MCF 10A (cell line): ENCODE measurements at regions of chr1 and their contacts with region 1.

Region 1: GRCh38 chr1:176559878-176560277 is 96.9 kb downstream of the PAPPA2 start:
- DNase-seq: peak; percentile 83
- H3K4me3 Mint-ChIP-seq: no peak overlapping the region
- H3K27ac Mint-ChIP-seq: no peak overlapping the region
- H3K4me1 Mint-ChIP-seq: no peaks in the 10 kb centered on the region
- H3K27me3 Mint-ChIP-seq: peaks cover 31% of the 10 kb centered on the region
- CTCF ChIP-seq: peak; percentile 99

Region 2: DNA sequence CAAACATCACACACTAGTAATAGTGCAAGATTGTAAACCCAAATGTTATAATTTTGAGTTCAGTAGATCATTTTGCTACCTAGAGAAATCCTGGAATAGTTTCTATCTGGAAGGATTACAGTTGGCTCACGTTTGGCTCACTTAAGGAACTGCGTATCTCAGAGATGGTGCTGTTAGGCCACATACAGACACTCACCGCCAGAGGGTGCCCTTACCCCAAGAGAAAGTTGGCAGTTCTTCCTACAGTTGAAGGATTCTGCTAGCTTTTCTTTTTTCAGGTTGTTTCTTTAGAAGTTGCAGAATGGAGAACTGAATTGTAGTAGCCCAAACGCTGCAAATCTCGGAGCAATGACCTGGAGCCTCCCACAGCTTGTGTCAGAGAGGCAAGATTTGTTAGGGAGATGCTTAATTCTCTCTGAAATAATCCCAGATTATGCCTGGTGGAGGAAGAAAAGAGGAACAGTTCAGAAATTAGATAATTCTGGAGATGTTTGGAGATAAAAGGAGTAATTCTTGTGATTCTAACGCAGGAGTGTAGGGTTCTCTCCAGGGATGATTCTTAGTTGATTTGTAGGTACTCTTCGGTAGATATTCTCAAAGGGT is 184.8 kb before region 1 on chr1:
- CTCF ChIA-PET with region 1: interaction called, 43 read pairs
- POLR2A ChIA-PET with region 1: interaction called, 3 read pairs
- intact Hi-C with region 1: loop called (anchors 1 kb)
- DNase-seq: peak; percentile 90
- H3K4me3 Mint-ChIP-seq: no peak overlapping the region
- H3K27ac Mint-ChIP-seq: no peak overlapping the region
- H3K4me1 Mint-ChIP-seq: no peaks in the 10 kb centered on the region
- H3K27me3 Mint-ChIP-seq: no peaks in the 10 kb centered on the region
- CTCF ChIP-seq: peak; percentile 93

Region 3: GRCh38 chr1:176541663-176542062 is 18.2 kb before region 1 on chr1:
- CTCF ChIA-PET with region 1: interaction called, 85 read pairs
- POLR2A ChIA-PET with region 1: no interaction called
- intact Hi-C with region 1: no loop called
- DNase-seq: peak; percentile 44
- H3K4me3 Mint-ChIP-seq: no peak overlapping the region
- H3K27ac Mint-ChIP-seq: no peak overlapping the region
- H3K4me1 Mint-ChIP-seq: peaks cover 5% of the 10 kb centered on the region
- H3K27me3 Mint-ChIP-seq: peaks cover 11% of the 10 kb centered on the region
- CTCF ChIP-seq: no peak

Region 4: GRCh38 chr1:176643536-176643935 is 83.7 kb after region 1 on chr1:
- CTCF ChIA-PET with region 1: interaction called, 10 read pairs
- POLR2A ChIA-PET with region 1: no interaction called
- intact Hi-C with region 1: no loop called
- DNase-seq: peak; percentile 46
- H3K4me3 Mint-ChIP-seq: no peak overlapping the region
- H3K27ac Mint-ChIP-seq: no peak overlapping the region
- H3K4me1 Mint-ChIP-seq: peaks cover 7% of the 10 kb centered on the region
- H3K27me3 Mint-ChIP-seq: no peaks in the 10 kb centered on the region
- CTCF ChIP-seq: no peak

Region 5: GRCh38 chr1:176701151-176701866 is 141.4 kb after region 1 on chr1:
- CTCF ChIA-PET with region 1: interaction called, 252 read pairs
- POLR2A ChIA-PET with region 1: no interaction called
- intact Hi-C with region 1: no loop called
- DNase-seq: no peak
- H3K4me3 Mint-ChIP-seq: no peak overlapping the region
- H3K27ac Mint-ChIP-seq: no peak overlapping the region
- H3K4me1 Mint-ChIP-seq: peaks cover 6% of the 10 kb centered on the region
- H3K27me3 Mint-ChIP-seq: no peaks in the 10 kb centered on the region
- CTCF ChIP-seq: no peak

Region 6: DNA sequence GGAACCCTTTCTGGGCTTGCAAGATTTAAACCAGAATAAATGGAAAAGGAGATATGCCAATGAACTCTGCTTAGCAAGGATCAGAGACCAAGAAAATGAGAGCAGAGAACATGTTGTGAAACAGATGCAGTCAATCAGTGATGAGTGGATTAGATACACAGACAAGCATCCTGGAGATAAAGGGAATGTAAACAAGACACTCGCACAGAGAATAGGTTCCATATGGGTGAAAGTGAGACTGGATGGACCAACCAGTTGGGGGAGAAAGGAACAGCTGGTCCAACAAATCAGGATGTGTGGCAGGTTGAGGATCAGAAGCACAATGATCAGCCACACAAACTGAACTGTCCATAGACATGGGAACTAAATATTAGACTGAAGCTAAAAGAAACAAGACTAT is 266.4 kb after region 1 on chr1:
- CTCF ChIA-PET with region 1: interaction called, 11 read pairs
- POLR2A ChIA-PET with region 1: no interaction called
- intact Hi-C with region 1: no loop called
- DNase-seq: no peak
- H3K4me3 Mint-ChIP-seq: no peak overlapping the region
- H3K27ac Mint-ChIP-seq: no peak overlapping the region
- H3K4me1 Mint-ChIP-seq: no peaks in the 10 kb centered on the region
- H3K27me3 Mint-ChIP-seq: no peaks in the 10 kb centered on the region
- CTCF ChIP-seq: no peak

Region 7: GRCh38 chr1:176863613-176864012 is 303.7 kb after region 1 on chr1:
- CTCF ChIA-PET with region 1: interaction called, 25 read pairs
- POLR2A ChIA-PET with region 1: no interaction called
- intact Hi-C with region 1: no loop called
- DNase-seq: peak; percentile 8
- H3K4me3 Mint-ChIP-seq: no peak overlapping the region
- H3K27ac Mint-ChIP-seq: no peak overlapping the region
- H3K4me1 Mint-ChIP-seq: peaks cover 19% of the 10 kb centered on the region
- H3K27me3 Mint-ChIP-seq: no peaks in the 10 kb centered on the region
- CTCF ChIP-seq: no peak